ENCODE measurements at regions of chr1 and their contacts with region 1.

Region 1: GRCh38 chr1:58031416-58031815 is 515.1 kb downstream of the OMA1 start:
- DNase-seq: peak; percentile 57
- ATAC-seq: peak; percentile 89
- H3K4me3 Mint-ChIP-seq: peak overlapping the region; percentile 35
- H3K27ac Mint-ChIP-seq: peak overlapping the region; percentile 95
- H3K4me1 Mint-ChIP-seq: peaks cover 79% of the 10 kb centered on the region
- H3K27me3 Mint-ChIP-seq: no peaks in the 10 kb centered on the region
- CTCF ChIP-seq: no peak

Region 2: DNA sequence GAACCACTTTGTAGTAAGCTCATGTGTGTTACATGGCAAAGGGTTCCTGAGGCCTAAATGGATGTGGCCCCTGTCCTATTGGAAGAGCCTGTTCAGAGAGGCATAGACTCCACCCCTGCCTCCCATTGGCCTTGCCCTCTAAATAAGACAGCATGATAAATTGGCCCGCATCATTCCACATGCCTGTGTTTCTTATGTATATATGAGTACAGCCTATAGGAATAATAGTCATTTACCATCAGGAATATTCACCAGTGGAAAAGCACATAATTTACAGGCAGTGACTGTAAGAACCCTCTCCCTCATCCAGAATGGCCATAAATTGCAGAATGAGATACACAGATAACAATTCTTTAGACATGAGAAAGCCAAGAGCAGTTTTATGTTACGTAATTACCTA is 88.1 kb before region 1 on chr1:
- CTCF ChIA-PET with region 1: no interaction called
- POLR2A ChIA-PET with region 1: no interaction called
- DNase-seq: no peak
- ATAC-seq: no peak
- H3K4me3 Mint-ChIP-seq: no peak overlapping the region
- H3K27ac Mint-ChIP-seq: no peak overlapping the region
- H3K4me1 Mint-ChIP-seq: peaks cover 6% of the 10 kb centered on the region; the same call in 1 of the 2 replicates
- H3K27me3 Mint-ChIP-seq: no peaks in the 10 kb centered on the region
- CTCF ChIP-seq: no peak

Region 3: GRCh38 chr1:58017641-58018040 is 13.8 kb before region 1 on chr1:
- CTCF ChIA-PET with region 1: interaction called, 12 read pairs
- POLR2A ChIA-PET with region 1: no interaction called
- DNase-seq: peak; percentile 13
- ATAC-seq: peak; percentile 85
- H3K4me3 Mint-ChIP-seq: no peak overlapping the region
- H3K27ac Mint-ChIP-seq: no peak overlapping the region
- H3K4me1 Mint-ChIP-seq: peaks cover 27% of the 10 kb centered on the region
- H3K27me3 Mint-ChIP-seq: no peaks in the 10 kb centered on the region; the same call in 1 of the 2 replicates
- CTCF ChIP-seq: no peak

Region 4: GRCh38 chr1:58047265-58047858 is 15.9 kb after region 1 on chr1:
- CTCF ChIA-PET with region 1: no interaction called
- POLR2A ChIA-PET with region 1: no interaction called
- DNase-seq: peak; percentile 57
- ATAC-seq: peak; percentile 79
- H3K4me3 Mint-ChIP-seq: no peak overlapping the region
- H3K27ac Mint-ChIP-seq: no peak overlapping the region
- H3K4me1 Mint-ChIP-seq: peaks cover 5% of the 10 kb centered on the region
- H3K27me3 Mint-ChIP-seq: no peaks in the 10 kb centered on the region
- CTCF ChIP-seq: peak; percentile 86

Measured in WTC11 (cell line).